WTC11 (cell line): ENCODE measurements at regions of chr14 and their contacts with region 1.

Region 1: DNA sequence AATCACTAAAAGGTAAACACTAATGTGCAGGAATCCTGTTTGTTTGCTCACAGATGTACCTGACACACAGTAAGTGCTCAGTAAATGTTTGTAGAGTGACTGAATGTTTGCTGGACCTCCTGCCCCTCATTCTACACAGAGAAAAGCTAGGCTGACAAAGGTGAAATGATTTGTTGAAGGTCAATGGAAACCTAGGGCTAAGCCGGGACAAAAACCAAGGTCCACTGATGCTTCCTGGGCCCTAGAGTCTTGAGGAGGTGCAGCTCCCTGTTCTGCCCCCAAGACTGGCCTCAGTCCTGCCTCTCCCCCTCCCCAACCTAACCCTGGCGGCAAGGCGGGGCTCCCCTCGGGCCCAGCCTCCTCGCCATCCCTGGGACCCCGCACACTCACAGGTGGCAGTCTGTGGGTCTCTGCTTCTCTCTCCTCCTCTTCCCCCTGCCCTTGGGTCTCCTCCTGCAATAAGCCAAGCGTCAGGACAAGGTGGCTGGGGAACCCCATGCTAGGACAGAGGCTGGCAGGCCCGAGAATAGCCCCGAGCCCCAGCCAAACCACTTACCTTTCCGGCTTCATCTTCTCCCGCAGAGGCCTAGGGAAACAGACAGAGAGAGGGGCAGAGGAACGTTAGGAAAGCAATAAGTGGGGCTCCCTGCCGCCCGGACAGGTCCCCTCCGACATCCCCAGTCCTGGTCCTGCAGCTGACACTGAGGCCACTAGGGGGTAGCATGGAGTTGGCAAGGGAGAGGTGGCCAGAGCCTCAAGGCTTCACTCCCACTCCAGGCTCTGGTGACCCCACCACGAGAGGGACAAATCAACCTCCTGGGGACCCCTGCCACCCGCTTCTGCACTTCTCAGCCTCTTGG is 9.3 kb downstream of the PGF start:
- DNase-seq: peak; percentile 92
- ATAC-seq: peak; percentile 84
- H3K4me3 Mint-ChIP-seq: no peak overlapping the region
- H3K27ac Mint-ChIP-seq: 0 out of 2 replicates have a peak overlapping the region, but pooled peaks have one; percentile 34
- H3K4me1 Mint-ChIP-seq: peaks cover 3% of the 10 kb centered on the region
- H3K27me3 Mint-ChIP-seq: no peaks in the 10 kb centered on the region
- CTCF ChIP-seq: peak; percentile 84

Region 2: GRCh38 chr14:74905375-74906142 is 40.5 kb before region 1 on chr14:
- CTCF ChIA-PET with region 1: interaction called, 29 read pairs
- POLR2A ChIA-PET with region 1: no interaction called
- DNase-seq: peak; percentile 84
- ATAC-seq: peak; percentile 58
- H3K4me3 Mint-ChIP-seq: no peak overlapping the region
- H3K27ac Mint-ChIP-seq: 0 out of 2 replicates have a peak overlapping the region, but pooled peaks have one; percentile 41
- H3K4me1 Mint-ChIP-seq: peaks cover 13% of the 10 kb centered on the region
- H3K27me3 Mint-ChIP-seq: no peaks in the 10 kb centered on the region
- CTCF ChIP-seq: peak; percentile 95

Region 3: DNA sequence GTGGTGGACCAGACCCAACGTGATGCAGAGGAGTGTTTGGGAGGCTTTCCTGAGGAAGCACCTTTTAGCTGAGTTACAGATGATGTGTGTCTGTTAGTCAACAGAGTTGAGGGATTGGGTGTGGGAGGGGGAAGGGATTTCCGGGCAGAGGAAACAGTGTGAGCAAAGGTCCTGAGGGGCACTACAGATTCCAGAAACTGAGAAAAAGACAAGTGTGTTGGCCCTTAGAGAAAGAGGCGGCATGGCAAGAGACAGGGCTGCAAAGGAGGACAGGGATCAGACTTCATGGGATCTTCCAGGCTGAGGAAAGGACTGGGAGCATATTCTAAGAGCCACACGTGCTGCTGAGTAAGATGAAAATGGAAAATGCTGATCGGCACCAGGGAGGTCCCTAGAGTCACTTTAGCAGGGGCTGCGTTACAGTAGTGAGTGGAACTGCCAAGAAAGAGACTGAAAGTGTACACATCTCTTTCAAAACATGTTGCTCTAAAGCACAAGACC is 13.6 kb before region 1 on chr14:
- CTCF ChIA-PET with region 1: interaction called, 23 read pairs
- POLR2A ChIA-PET with region 1: no interaction called
- DNase-seq: no peak
- ATAC-seq: peak; percentile 28; the same call in 1 of the 2 replicates
- H3K4me3 Mint-ChIP-seq: no peak overlapping the region
- H3K27ac Mint-ChIP-seq: 0 out of 2 replicates have a peak overlapping the region, but pooled peaks have one; percentile 71
- H3K4me1 Mint-ChIP-seq: 0 out of 2 replicates have a peak, but pooled peaks cover 3% of the 10 kb centered on the region
- H3K27me3 Mint-ChIP-seq: no peaks in the 10 kb centered on the region; the same call in 1 of the 2 replicates
- CTCF ChIP-seq: no peak

Region 4: GRCh38 chr14:74973003-74973653 is 27.1 kb after region 1 on chr14:
- CTCF ChIA-PET with region 1: interaction called, 53 read pairs
- POLR2A ChIA-PET with region 1: no interaction called
- DNase-seq: no peak
- ATAC-seq: peak; percentile 16; the same call in 1 of the 2 replicates
- H3K4me3 Mint-ChIP-seq: no peak overlapping the region
- H3K27ac Mint-ChIP-seq: no peak overlapping the region
- H3K4me1 Mint-ChIP-seq: peaks cover 17% of the 10 kb centered on the region
- H3K27me3 Mint-ChIP-seq: no peaks in the 10 kb centered on the region
- CTCF ChIP-seq: no peak

Region 5: DNA sequence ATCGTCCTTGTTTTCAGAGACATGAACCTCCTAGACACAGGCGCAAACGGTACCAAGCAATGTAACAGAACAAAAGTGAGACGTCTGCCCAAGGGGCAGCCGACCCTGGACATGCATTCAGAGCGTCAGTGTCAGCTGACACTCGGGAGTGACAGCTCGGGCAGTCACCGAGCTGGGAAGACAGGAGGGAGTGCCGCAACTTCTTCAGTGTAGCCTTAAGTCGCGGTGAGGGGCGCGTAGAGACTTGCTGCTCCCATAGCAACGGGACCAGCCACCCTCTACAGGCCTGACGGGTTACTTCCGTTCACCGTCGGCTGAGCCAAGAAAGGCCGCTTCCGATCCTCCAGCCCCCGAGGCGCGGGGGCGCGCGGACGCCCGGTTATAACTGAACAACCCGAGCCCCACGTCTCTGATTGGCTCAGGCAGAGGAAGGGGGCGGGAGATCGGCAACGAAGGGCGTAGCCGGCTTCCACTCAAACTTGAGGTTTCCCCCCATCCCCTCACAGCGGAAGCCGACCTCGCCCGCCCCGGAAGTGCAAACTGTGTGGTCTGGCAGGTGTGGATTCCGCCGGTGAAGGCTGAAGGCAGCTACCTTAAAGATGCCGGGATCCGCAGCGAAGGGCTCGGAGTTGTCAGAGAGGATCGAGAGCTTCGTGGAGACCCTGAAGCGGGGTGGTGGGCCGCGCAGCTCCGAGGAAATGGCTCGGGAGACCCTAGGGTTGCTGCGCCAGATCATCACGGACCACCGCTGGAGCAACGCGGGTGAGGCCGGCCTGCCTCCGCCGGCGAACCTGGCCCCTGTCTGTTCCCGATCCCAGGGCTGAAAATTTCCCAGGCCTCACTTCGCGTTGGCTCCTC is 56.6 kb after region 1 on chr14 and contains the start of gene EIF2B2:
- CTCF ChIA-PET with region 1: interaction called, 22 read pairs
- POLR2A ChIA-PET with region 1: no interaction called
- DNase-seq: peak; percentile 100
- ATAC-seq: peak; percentile 98
- H3K4me3 Mint-ChIP-seq: peak within 1 kb of the TSS; percentile 90
- H3K27ac Mint-ChIP-seq: peak within 1 kb of the TSS; percentile 56
- H3K4me1 Mint-ChIP-seq: peaks cover 13% of the 10 kb centered on the region
- H3K27me3 Mint-ChIP-seq: no peaks in the 10 kb centered on the region
- CTCF ChIP-seq: no peak
- total RNA-seq, gene EIF2B2: 46.0 to 50.7 TPM (median 50.5 TPM) in 3 replicates

Region 6: GRCh38 chr14:75063407-75064213 is 117.6 kb after region 1 on chr14 and contains the start of gene ACYP1:
- CTCF ChIA-PET with region 1: interaction called, 29 read pairs
- POLR2A ChIA-PET with region 1: no interaction called
- DNase-seq: peak; percentile 97
- ATAC-seq: peak; percentile 98
- H3K4me3 Mint-ChIP-seq: peak within 1 kb of the TSS; percentile 96
- H3K27ac Mint-ChIP-seq: peak within 1 kb of the TSS; percentile 79
- H3K4me1 Mint-ChIP-seq: peaks cover 14% of the 10 kb centered on the region
- H3K27me3 Mint-ChIP-seq: no peaks in the 10 kb centered on the region
- CTCF ChIP-seq: no peak
- total RNA-seq, gene ACYP1: 22.4 to 26.6 TPM (median 23.0 TPM) in 3 replicates